GM13976 (cell line): ENCODE measurements at regions of chr12 and their contacts with region 1.

Region 1: DNA sequence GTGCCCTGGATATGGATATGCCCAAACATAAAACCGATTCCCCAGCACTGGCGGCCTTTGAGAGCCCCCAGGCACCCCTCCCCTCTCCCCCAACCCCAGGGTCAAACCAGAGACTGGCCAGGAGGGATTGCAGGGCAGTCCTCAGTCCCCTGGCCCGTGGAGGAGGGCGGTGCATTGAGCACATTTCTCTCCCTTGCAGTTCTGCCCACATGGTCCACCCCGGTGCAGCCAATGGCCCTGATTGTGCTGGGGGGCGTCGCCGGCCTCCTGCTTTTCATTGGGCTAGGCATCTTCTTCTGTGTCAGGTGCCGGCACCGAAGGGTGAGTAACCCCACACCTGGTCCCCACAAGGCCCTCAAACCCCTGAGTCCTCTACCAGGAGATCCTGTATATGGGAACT is 3.4 kb upstream of the GPR162 start:
- DNase-seq: no peak
- CTCF ChIP-seq: no peak

Region 2: GRCh38 chr12:6766651-6767349 is 51.4 kb before region 1 on chr12:
- in situ Hi-C with region 1: no loop called
- DNase-seq: peak; percentile 85
- CTCF ChIP-seq: peak; percentile 84

Region 3: DNA sequence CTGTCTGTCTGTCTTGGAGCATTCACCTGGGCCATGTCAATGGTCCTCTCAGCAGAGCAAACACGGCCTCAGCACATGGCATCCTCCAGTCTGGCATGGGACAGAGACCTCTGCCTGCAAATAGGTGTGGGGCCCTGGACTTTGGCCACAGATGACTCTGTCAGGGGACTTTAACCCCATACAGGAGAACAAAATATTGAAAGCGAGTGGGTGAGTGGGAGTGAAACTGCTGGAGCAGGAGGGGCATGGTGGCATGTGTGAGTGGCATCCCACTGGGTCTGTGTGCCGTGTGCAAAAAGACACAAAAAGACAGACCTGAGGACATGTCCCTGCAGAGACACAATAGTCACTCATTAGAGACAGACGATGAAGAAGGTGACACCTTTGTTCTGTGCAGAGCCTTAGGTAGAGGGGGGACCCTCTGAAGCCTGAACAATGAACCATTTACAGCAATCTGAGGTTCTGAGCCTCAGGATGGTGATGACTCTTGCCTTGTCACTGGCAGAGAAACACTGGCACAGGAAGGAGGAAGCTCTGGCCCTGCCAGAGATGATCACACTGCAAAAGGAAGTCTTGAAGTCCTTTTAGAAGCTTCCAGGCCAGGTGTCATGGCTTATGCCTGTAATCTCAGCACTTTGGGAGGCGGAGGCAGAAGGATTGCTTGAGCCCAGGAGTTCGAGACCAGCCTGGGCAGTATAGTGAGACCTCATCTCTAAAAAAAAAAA is 38.4 kb before region 1 on chr12:
- in situ Hi-C with region 1: loop called (anchors 5 kb)
- DNase-seq: no peak
- CTCF ChIP-seq: no peak